Naive thymus-derived CD4-positive, alpha-beta T cell (primary cell): ENCODE measurements at regions of chr14 and their contacts with region 1.

Region 1: GRCh38 chr14:31106768-31107167 is 80.6 kb upstream of the STRN3 start:
- DNase-seq: no peak
- ATAC-seq: no peak
- H3K4me3 ChIP-seq: no peak overlapping the region
- H3K4me3 Mint-ChIP-seq: no peak overlapping the region
- H3K27ac ChIP-seq: no peak overlapping the region
- H3K27ac Mint-ChIP-seq: peak overlapping the region in 1 of 9 donors; percentile 56
- H3K4me1 ChIP-seq: no peaks in the 10 kb centered on the region
- H3K4me1 Mint-ChIP-seq: no peaks in the 10 kb centered on the region
- H3K27me3 ChIP-seq: no peaks in the 10 kb centered on the region
- H3K27me3 Mint-ChIP-seq: no peaks in the 10 kb centered on the region

Region 2: GRCh38 chr14:31026395-31027118 is 80.2 kb before region 1 on chr14:
- CTCF ChIA-PET with region 1: no interaction called
- POLR2A ChIA-PET with region 1: no interaction called
- intact Hi-C with region 1: no loop called
- DNase-seq: peak; percentile 74 to 93 (median 80)
- ATAC-seq: peak; percentile 97
- H3K4me3 ChIP-seq: peak overlapping the region; percentile 84
- H3K4me3 Mint-ChIP-seq: peak overlapping the region; percentile 86 to 100 (median 96)
- H3K27ac ChIP-seq: peak overlapping the region; percentile 91
- H3K27ac Mint-ChIP-seq: peak overlapping the region; percentile 89 to 98 (median 96)
- H3K4me1 ChIP-seq: no peaks in the 10 kb centered on the region
- H3K4me1 Mint-ChIP-seq: peaks cover 38 to 62% (median 49%) of the 10 kb centered on the region in 7 donors
- H3K27me3 ChIP-seq: no peaks in the 10 kb centered on the region
- H3K27me3 Mint-ChIP-seq: no peaks in the 10 kb centered on the region

Region 3: DNA sequence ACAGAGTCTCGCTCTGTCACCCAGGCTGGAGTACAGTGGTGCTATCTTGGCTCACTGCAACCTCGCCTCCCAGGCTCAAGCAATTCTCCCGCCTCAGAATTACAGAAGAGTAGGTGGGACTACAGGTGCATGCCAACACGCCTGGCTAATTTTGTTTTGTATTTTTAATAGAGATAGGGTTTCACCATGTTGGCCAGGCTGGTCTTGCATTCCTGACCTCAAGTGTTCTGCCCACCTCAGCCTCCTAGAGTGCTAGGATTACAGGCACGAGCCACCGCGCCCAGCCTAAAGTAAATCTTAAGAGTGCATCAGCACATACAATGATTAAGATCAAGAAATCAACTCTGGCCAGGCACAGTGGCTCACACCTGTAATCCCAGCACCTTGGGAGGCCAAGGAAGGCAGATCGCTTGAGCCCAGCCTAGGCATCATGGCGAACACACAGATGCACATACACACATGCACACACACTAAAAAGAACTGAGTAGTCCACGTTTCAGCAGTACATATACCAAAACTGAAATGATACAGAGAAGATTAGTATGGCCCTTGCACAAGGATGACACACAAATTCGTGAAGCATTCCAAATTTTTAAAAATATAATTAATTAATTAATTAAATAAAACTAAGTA is 35.8 kb after region 1 on chr14:
- CTCF ChIA-PET with region 1: no interaction called
- POLR2A ChIA-PET with region 1: no interaction called
- intact Hi-C with region 1: loop called in 1 of 2 experiments (anchors 5 kb)
- DNase-seq: no peak
- ATAC-seq: no peak
- H3K4me3 ChIP-seq: no peak overlapping the region
- H3K4me3 Mint-ChIP-seq: no peak overlapping the region
- H3K27ac ChIP-seq: no peak overlapping the region
- H3K27ac Mint-ChIP-seq: peak overlapping the region in 1 of 9 donors; percentile 22
- H3K4me1 ChIP-seq: no peaks in the 10 kb centered on the region
- H3K4me1 Mint-ChIP-seq: peaks cover 0 to 5% (median 0%) of the 10 kb centered on the region in 7 donors
- H3K27me3 ChIP-seq: no peaks in the 10 kb centered on the region
- H3K27me3 Mint-ChIP-seq: no peaks in the 10 kb centered on the region